ENCODE measurements at regions of chr16 and their contacts with region 1.

Region 1: DNA sequence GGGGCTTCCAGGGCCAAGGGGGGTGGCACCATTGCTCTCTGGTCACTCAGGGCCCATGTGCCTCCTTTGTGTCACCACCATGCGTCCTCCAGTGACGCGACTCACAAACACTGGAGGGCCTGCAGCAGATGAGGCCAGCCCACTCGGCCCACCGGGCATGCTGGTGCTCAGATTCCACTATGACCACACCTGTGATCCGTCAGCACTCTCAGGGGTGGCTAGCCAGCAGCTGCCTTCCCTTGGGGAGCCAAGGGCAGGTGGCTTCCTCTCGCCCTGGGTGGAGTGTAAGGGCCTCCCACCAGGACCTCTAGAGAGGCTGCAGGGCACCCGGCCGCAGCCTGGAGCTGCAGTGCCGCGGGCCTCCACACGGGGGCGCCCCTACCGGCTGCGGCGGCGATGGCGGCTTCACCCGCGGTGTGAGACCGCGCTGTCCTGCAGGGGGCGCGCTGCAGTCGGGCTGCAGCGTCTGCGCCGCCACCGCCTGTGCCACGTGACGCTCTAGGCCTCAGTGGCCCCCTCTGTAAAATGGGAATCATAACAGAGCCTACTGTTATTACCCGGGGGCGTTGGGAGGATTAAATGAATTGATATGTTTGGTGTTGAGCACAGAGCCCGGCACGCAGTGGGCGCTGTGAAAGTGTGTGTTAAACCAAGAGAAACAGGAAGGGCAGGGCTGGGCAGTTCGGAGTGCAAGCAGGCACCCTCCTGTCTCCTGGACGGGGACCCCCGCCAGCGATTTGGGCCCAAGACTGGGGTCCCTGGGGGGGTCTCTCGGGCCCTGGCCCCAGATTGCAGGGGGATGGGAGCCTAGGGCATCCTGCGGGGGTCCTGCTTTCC is 192.4 kb upstream of the GSE1 start:
- DNase-seq: peak in 1 of 2 experiments; percentile 96
- H3K4me3 ChIP-seq: no peak overlapping the region
- H3K27ac ChIP-seq: no peak overlapping the region
- H3K4me1 ChIP-seq: peaks cover 0 to 21% (median 5%) of the 10 kb centered on the region in 4 experiments; a peak in 5 of 7 replicates
- H3K27me3 ChIP-seq: no peaks in the 10 kb centered on the region
- CTCF ChIP-seq: peak; percentile 98 to 99 (median 99)
- EP300 ChIP-seq: no peak
- POLR2A ChIP-seq: no peak
- RAD21 ChIP-seq: peak; percentile 77 to 81

Region 2: GRCh38 chr16:84995663-84996062 is 425.1 kb before region 1 on chr16:
- CTCF ChIA-PET with region 1: no interaction called
- POLR2A ChIA-PET with region 1: no interaction called
- DNase-seq: no peak
- H3K4me3 ChIP-seq: no peak overlapping the region
- H3K27ac ChIP-seq: no peak overlapping the region
- H3K4me1 ChIP-seq: 0 out of 7 replicates have a peak, but pooled peaks cover 0 to 3% (median 0%) of the 10 kb centered on the region in 4 experiments
- H3K27me3 ChIP-seq: no peaks in the 10 kb centered on the region
- CTCF ChIP-seq: no peak
- EP300 ChIP-seq: no peak
- POLR2A ChIP-seq: no peak
- RAD21 ChIP-seq: no peak

Region 3: DNA sequence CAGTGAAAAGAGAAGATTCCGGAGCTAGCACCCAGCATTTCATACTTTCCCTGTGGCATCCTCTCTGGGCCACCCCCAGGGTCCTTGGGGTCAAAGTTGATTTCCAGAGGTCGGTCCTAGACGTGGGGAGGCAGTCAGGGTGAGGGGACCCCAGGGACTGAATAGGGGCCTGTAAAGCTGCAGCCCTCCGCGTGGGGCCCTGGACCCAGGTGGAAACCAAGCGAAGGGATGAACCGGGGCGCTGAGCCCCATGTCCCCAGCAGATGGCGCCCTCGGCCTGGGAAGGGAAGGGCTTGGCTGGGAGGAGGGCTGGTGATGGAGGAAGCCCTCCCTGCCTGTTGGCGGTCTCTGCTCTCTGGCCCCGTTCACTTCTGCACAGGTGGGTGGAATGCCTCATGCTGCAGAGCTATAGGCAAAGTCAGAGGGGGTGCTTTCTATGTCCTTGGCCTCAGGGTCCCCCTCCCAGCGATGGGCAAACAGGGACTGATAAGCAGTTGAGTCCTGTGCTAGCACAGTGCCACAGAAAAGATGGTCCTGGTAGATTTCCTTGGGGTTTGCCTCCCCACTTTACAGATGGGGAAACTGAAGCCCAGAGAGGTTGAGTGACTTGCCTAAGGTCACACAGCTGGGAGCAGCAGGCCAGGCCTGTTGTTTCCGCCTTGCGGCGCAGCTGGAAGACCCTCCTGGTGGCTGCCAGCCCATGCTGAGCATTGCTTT is 145.0 kb before region 1 on chr16:
- CTCF ChIA-PET with region 1: interaction called, 18 read pairs
- POLR2A ChIA-PET with region 1: no interaction called
- DNase-seq: peak in 1 of 2 experiments; percentile 96
- H3K4me3 ChIP-seq: no peak overlapping the region
- H3K27ac ChIP-seq: no peak overlapping the region
- H3K4me1 ChIP-seq: peaks cover 0 to 15% (median 4%) of the 10 kb centered on the region in 4 experiments; a peak in 4 of 7 replicates
- H3K27me3 ChIP-seq: peaks cover 0 to under 1% (median 0%) of the 10 kb centered on the region in 4 experiments; a peak in 1 of 7 replicates
- CTCF ChIP-seq: peak; percentile 96 to 99 (median 97)
- EP300 ChIP-seq: no peak
- POLR2A ChIP-seq: no peak
- RAD21 ChIP-seq: peak; percentile 91 to 93

Region 4: DNA sequence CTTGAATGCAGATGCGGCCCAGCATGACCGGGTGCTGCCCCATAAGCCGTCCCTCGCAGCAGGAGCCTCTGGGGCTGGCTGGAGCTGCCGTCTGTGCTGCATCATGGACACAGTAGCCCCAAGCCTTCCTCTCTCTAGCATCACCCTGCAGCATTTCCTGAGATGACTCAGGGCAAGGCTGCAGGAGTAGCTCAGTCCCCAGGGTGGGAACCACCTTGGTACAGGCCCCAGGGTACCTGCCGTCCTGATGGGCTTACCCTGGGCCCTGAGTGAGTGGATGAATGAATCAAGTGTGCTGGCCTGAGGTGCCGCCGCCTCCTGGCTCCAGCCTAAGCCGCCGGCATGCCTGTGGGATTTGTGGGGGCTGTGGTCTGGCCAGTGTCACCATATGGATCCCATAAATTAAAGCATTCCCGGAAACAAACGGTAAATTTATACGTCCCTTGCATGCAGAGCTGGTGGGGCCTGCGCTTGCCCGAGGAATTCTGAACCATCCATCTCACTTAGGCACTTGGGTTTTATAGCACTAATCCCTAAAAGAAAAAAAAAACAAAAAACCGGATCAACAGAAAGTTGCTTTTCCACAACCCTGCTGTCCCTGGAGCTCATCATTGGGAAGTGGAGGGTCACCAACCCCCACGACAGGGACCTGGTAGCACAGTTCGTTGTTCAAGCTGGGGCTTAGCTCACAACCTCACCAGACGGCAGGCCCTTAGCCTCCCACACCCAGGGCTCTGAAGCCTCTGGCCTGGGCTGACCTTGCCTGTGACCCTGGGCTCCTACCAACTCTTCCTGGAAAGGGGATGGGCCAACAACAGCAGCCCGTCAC is 65.8 kb before region 1 on chr16:
- CTCF ChIA-PET with region 1: interaction called, 11 read pairs
- POLR2A ChIA-PET with region 1: no interaction called
- DNase-seq: no peak
- H3K4me3 ChIP-seq: no peak overlapping the region
- H3K27ac ChIP-seq: no peak overlapping the region
- H3K4me1 ChIP-seq: peaks cover 0 to 8% (median 3%) of the 10 kb centered on the region in 4 experiments; a peak in 3 of 7 replicates
- H3K27me3 ChIP-seq: no peaks in the 10 kb centered on the region
- CTCF ChIP-seq: no peak
- EP300 ChIP-seq: no peak
- POLR2A ChIP-seq: no peak
- RAD21 ChIP-seq: no peak

Region 5: DNA sequence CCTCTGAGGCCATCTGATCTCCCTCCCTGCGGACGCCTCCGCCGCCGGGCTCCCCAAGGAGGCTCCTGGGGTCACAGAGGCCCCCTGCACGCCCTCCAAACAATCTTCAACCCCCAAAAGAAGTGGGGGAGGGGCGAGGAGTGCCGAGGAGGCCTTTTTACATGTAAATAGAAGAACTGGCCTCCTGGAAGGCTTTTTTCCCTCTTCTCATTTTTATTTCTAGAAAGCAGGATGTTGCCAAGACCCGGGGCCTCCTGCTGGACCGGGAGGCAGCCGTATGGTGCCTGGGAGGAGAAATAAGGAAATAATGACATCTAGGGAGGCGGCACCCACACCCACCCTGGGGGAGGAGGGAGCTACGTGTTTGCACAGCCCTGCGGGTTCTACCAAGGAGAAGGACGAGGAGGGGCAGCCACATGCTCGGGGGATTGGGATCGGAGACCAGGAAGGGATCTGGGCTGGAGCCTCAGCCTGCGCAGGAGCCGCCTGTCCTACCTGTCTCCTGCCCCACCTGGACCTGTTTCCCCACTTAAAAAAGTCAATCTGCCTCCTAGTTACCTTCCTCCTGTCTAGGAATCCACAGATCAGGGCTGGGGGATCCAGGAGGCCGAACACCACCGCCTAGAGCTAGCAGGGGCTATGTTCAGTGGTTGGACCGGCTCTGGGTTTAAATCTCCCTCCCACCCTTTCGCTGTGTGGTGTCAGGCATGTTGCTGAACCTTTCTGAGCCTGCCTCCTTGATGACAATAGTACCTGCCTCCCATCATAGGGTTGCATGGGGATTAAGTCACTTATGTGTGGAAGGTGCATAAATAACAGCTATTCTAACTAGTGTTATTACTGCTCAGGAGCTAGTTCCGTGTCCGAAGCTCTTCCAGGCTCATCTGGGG is 16.7 kb after region 1 on chr16:
- CTCF ChIA-PET with region 1: interaction called, 178 read pairs
- POLR2A ChIA-PET with region 1: interaction called, 6 read pairs
- DNase-seq: no peak
- H3K4me3 ChIP-seq: peak overlapping the region in 1 of 4 experiments; percentile 50; a peak in 2 of 8 replicates
- H3K27ac ChIP-seq: peak overlapping the region; percentile 21; the same call in 1 of the 2 replicates
- H3K4me1 ChIP-seq: peaks cover 14 to 47% (median 35%) of the 10 kb centered on the region in 4 experiments
- H3K27me3 ChIP-seq: peaks cover 0 to 7% (median 0%) of the 10 kb centered on the region in 4 experiments; a peak in 3 of 7 replicates
- CTCF ChIP-seq: no peak
- EP300 ChIP-seq: no peak
- POLR2A ChIP-seq: no peak; a peak in 1 of 3 replicates
- RAD21 ChIP-seq: no peak

Region 6: GRCh38 chr16:85491058-85491771 is 70.5 kb after region 1 on chr16:
- CTCF ChIA-PET with region 1: interaction called, 17 read pairs
- POLR2A ChIA-PET with region 1: no interaction called
- DNase-seq: peak in 1 of 2 experiments; percentile 89
- H3K4me3 ChIP-seq: no peak overlapping the region
- H3K27ac ChIP-seq: no peak overlapping the region
- H3K4me1 ChIP-seq: peaks cover 3 to 19% (median 14%) of the 10 kb centered on the region in 4 experiments; a peak in 6 of 7 replicates
- H3K27me3 ChIP-seq: no peaks in the 10 kb centered on the region
- CTCF ChIP-seq: peak; percentile 89 to 96 (median 95)
- EP300 ChIP-seq: no peak
- POLR2A ChIP-seq: no peak
- RAD21 ChIP-seq: peak; percentile 66 to 76

Region 7: GRCh38 chr16:85554112-85554813 is 133.5 kb after region 1 on chr16:
- CTCF ChIA-PET with region 1: interaction called, 57 read pairs
- POLR2A ChIA-PET with region 1: no interaction called
- DNase-seq: no peak
- H3K4me3 ChIP-seq: peak overlapping the region; percentile 54 to 98 (median 61)
- H3K27ac ChIP-seq: no peak overlapping the region
- H3K4me1 ChIP-seq: peaks cover 0 to 27% (median 21%) of the 10 kb centered on the region in 4 experiments; a peak in 6 of 7 replicates
- H3K27me3 ChIP-seq: no peaks in the 10 kb centered on the region; a peak in 2 of 7 replicates
- CTCF ChIP-seq: no peak
- EP300 ChIP-seq: no peak
- POLR2A ChIP-seq: no peak
- RAD21 ChIP-seq: no peak

Region 8: GRCh38 chr16:85610508-85611332 is 190.0 kb after region 1 on chr16:
- CTCF ChIA-PET with region 1: interaction called, 79 read pairs
- POLR2A ChIA-PET with region 1: interaction called, 3 read pairs
- DNase-seq: peak; percentile 88 to 96
- H3K4me3 ChIP-seq: peak overlapping the region; percentile 29 to 92 (median 52); a peak in 6 of 8 replicates
- H3K27ac ChIP-seq: peak overlapping the region; percentile 70; the same call in 1 of the 2 replicates
- H3K4me1 ChIP-seq: peaks cover 10 to 46% (median 41%) of the 10 kb centered on the region in 4 experiments
- H3K27me3 ChIP-seq: peaks cover 0 to 9% (median 4%) of the 10 kb centered on the region in 4 experiments; a peak in 2 of 7 replicates
- CTCF ChIP-seq: peak in 2 of 3 experiments; percentile 90 to 99; a peak in 3 of 4 replicates
- EP300 ChIP-seq: peak in 1 of 2 experiments; percentile 83; a peak in 1 of 3 replicates
- POLR2A ChIP-seq: no peak
- RAD21 ChIP-seq: peak; percentile 97 to 98

Measured in H1 (cell line).